GM12878 (cell line): ENCODE measurements at regions of chr13 and their contacts with region 1.

Region 1: DNA sequence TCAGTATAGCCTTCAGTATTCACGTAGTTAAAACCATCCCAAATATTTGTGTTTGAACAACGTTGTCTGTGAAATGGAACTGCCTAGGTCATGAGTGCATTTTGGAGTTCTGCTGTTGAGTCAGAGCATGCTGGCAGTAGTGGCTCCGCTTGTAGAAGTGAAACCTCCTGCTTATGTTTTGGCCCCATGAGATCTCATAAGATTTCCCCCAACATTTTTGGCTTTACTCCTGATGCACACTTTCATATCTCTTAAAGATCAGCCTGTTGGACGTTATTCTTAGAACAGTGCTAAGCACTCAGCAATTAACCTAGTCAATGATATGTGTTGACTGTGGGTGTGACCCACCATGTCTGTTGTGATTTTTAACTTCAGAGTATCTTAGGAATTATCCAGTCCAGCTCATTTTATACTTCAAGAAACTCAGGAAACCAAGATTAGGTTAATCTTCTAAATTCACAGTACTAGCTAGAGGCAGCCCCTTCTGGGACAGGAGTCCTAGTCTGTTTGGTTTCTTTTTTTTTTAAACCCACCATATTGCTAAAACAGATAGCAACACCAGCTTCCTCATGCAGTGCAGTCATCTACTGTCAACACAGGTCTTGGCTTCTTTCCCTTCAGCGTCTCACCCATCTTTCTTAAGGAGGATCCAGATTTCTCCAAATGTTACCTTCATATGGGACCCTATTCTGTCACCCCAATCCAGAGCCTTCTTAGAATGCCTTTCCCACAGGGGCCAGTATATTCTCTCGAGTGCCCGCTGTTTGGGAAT is 26.2 kb downstream of the RAP2A start:
- DNase-seq: peak; percentile 91
- ATAC-seq: peak; percentile 94
- H3K4me3 ChIP-seq: peak overlapping the region; percentile 53
- H3K27ac ChIP-seq: peak overlapping the region; percentile 92
- H3K4me1 ChIP-seq: peaks cover 39% of the 10 kb centered on the region
- H3K27me3 ChIP-seq: no peaks in the 10 kb centered on the region
- CTCF ChIP-seq: no peak
- EP300 ChIP-seq: peak; percentile 82 to 85
- POLR2A ChIP-seq: no peak
- RAD21 ChIP-seq: peak; percentile 9; the same call in 1 of the 2 replicates

Region 2: GRCh38 chr13:97441368-97441767 is 18.8 kb before region 1 on chr13:
- CTCF ChIA-PET with region 1: interaction called, 13 read pairs
- POLR2A ChIA-PET with region 1: interaction called, 108 read pairs
- RAD21 ChIA-PET with region 1: interaction called, 179 read pairs
- SMC1A ChIA-PET with region 1: interaction called, 165 read pairs
- in situ Hi-C with region 1: no loop called
- intact Hi-C with region 1: no loop called
- DNase-seq: no peak
- ATAC-seq: peak; percentile 76
- H3K4me3 ChIP-seq: peak overlapping the region; percentile 25; the same call in 1 of the 2 replicates
- H3K27ac ChIP-seq: peak overlapping the region; percentile 22; the same call in 1 of the 2 replicates
- H3K4me1 ChIP-seq: peaks cover 6% of the 10 kb centered on the region
- H3K27me3 ChIP-seq: no peaks in the 10 kb centered on the region
- CTCF ChIP-seq: no peak
- EP300 ChIP-seq: no peak
- POLR2A ChIP-seq: no peak
- RAD21 ChIP-seq: no peak

Region 3: GRCh38 chr13:97448503-97449230 is 11.5 kb before region 1 on chr13:
- CTCF ChIA-PET with region 1: interaction called, 34 read pairs
- POLR2A ChIA-PET with region 1: interaction called, 24 read pairs
- RAD21 ChIA-PET with region 1: interaction called, 47 read pairs
- SMC1A ChIA-PET with region 1: interaction called, 64 read pairs
- in situ Hi-C with region 1: no loop called
- intact Hi-C with region 1: no loop called
- DNase-seq: peak; percentile 45
- ATAC-seq: peak; percentile 77
- H3K4me3 ChIP-seq: no peak overlapping the region
- H3K27ac ChIP-seq: no peak overlapping the region
- H3K4me1 ChIP-seq: no peaks in the 10 kb centered on the region
- H3K27me3 ChIP-seq: no peaks in the 10 kb centered on the region
- CTCF ChIP-seq: no peak
- EP300 ChIP-seq: no peak
- POLR2A ChIP-seq: no peak
- RAD21 ChIP-seq: no peak